ENCODE measurements at regions of chr20 and their contacts with region 1.

Region 1: GRCh38 chr20:44624152-44624551 is 27.3 kb downstream of the ADA start:
- DNase-seq: no peak
- H3K4me3 ChIP-seq: no peak overlapping the region
- H3K27ac ChIP-seq: no peak overlapping the region
- H3K4me1 ChIP-seq: no peaks in the 10 kb centered on the region
- H3K27me3 ChIP-seq: no peaks in the 10 kb centered on the region
- CTCF ChIP-seq: no peak

Region 2: GRCh38 chr20:44513871-44514270 is 110.3 kb before region 1 on chr20:
- CTCF ChIA-PET with region 1: no interaction called
- POLR2A ChIA-PET with region 1: no interaction called
- intact Hi-C with region 1: no loop called
- DNase-seq: no peak
- H3K4me3 ChIP-seq: no peak overlapping the region
- H3K27ac ChIP-seq: no peak overlapping the region
- H3K4me1 ChIP-seq: no peaks in the 10 kb centered on the region
- H3K27me3 ChIP-seq: no peaks in the 10 kb centered on the region
- CTCF ChIP-seq: no peak

Region 3: GRCh38 chr20:44664131-44664530 is 40.0 kb after region 1 on chr20:
- CTCF ChIA-PET with region 1: no interaction called
- POLR2A ChIA-PET with region 1: no interaction called
- intact Hi-C with region 1: no loop called
- DNase-seq: no peak
- H3K4me3 ChIP-seq: no peak overlapping the region
- H3K27ac ChIP-seq: no peak overlapping the region
- H3K4me1 ChIP-seq: no peaks in the 10 kb centered on the region
- H3K27me3 ChIP-seq: no peaks in the 10 kb centered on the region
- CTCF ChIP-seq: no peak

Region 4: DNA sequence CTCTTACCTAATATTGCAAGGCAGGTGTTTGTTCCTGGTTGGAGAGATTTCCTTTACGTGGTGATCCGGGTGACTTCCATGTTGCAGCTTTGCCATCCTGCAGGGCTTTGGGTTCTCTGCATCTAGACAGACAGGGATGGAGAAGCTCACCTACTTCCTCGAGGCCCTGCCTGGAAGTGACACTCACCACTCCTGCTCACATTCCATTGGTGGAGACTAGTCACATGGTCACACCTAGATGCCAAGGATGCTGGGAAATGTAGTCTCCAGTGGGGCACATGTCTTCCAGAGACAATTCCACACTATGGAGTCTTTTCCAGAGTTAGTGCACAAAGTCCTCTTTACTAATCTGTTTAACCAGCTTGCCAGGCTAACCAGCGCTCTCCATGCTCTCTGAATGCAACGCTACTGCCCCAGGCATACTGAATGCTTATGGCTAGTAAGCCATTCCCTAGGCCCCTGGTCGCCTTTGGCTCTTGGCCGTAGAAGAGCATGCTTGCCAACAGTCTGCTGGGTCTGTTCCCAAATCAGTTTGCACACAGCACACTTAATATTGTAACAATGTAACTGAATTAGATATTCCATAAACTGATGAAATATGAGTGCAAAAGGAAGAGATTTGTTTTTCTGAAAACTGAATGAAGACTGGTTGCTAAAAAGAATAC is 114.8 kb after region 1 on chr20:
- CTCF ChIA-PET with region 1: no interaction called
- POLR2A ChIA-PET with region 1: no interaction called
- intact Hi-C with region 1: no loop called
- DNase-seq: peak; percentile 57 to 79
- H3K4me3 ChIP-seq: no peak overlapping the region
- H3K27ac ChIP-seq: no peak overlapping the region
- H3K4me1 ChIP-seq: peaks cover 14% of the 10 kb centered on the region; the same call in 1 of the 2 replicates
- H3K27me3 ChIP-seq: peaks cover 33% of the 10 kb centered on the region; the same call in 1 of the 2 replicates
- CTCF ChIP-seq: no peak

Region 5: DNA sequence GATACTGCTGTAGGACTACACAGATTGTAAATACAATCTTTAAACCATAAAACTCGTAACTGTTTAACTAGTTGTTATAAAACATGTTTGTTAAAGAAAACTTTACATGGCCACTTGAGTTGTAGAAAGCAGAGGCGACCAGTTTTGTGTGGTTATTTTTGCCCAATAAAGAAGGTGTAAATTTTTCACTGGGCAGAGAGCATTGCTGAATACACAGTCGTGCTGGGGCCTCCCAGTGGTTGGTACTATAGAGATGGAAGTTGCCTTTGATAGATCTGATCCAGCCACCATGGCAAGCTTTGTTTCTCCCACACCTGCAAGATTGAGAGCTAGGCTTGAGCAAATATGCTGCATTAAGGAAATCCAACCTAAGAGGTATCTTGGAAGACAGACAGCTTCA is 227.4 kb after region 1 on chr20:
- CTCF ChIA-PET with region 1: interaction called, 14 read pairs
- POLR2A ChIA-PET with region 1: no interaction called
- intact Hi-C with region 1: no loop called
- DNase-seq: no peak
- H3K4me3 ChIP-seq: no peak overlapping the region
- H3K27ac ChIP-seq: no peak overlapping the region
- H3K4me1 ChIP-seq: peaks cover 7% of the 10 kb centered on the region
- H3K27me3 ChIP-seq: peaks cover 41% of the 10 kb centered on the region
- CTCF ChIP-seq: no peak

Measured in PC-9 (cell line).